ENCODE measurements at regions of chr3 and their contacts with region 1.

Region 1: GRCh38 chr3:197256836-197257444 is 41.5 kb downstream of the DLG1 start:
- DNase-seq: no peak
- ATAC-seq: no peak
- H3K4me3 ChIP-seq: no peak overlapping the region
- H3K27ac ChIP-seq: no peak overlapping the region
- H3K4me1 ChIP-seq: peaks cover 3% of the 10 kb centered on the region
- H3K27me3 ChIP-seq: no peaks in the 10 kb centered on the region

Region 2: GRCh38 chr3:197456261-197457091 is 199.5 kb after region 1 on chr3:
- intact Hi-C with region 1: loop called in 1 of 4 experiments (anchors 10 kb)
- DNase-seq: peak; percentile 92 to 95 (median 95)
- ATAC-seq: peak; percentile 97
- H3K4me3 ChIP-seq: peak overlapping the region; percentile 78
- H3K27ac ChIP-seq: peak overlapping the region; percentile 80
- H3K4me1 ChIP-seq: no peaks in the 10 kb centered on the region
- H3K27me3 ChIP-seq: no peaks in the 10 kb centered on the region

Region 3: GRCh38 chr3:197504239-197505121 is 247.5 kb after region 1 on chr3:
- intact Hi-C with region 1: loop called in 2 of 4 experiments (anchors 2 to 5 kb)
- DNase-seq: no peak
- ATAC-seq: no peak
- H3K4me3 ChIP-seq: no peak overlapping the region
- H3K27ac ChIP-seq: no peak overlapping the region
- H3K4me1 ChIP-seq: no peaks in the 10 kb centered on the region
- H3K27me3 ChIP-seq: no peaks in the 10 kb centered on the region

Region 4: DNA sequence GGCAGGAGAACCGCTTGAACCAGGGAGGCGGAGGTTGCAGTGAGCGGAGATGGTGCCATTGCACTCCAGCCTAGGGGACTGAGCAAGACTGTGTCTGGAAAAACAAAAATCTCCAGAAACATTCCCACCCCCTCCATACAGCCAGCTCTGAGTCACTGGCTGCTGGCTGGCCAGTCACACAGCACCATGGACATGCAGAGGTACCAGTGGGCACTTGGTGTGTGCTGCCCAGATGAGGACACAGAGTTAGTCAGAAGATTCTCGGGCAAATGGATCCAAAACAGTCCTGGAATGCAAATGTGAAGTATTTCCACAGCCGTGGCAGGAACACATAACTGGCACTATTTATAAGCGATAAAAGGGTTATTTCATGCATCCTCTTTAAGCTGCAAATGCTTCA is 254.2 kb after region 1 on chr3:
- intact Hi-C with region 1: loop called (anchors 2 to 5 kb)
- DNase-seq: no peak
- ATAC-seq: no peak
- H3K4me3 ChIP-seq: no peak overlapping the region
- H3K27ac ChIP-seq: no peak overlapping the region
- H3K4me1 ChIP-seq: no peaks in the 10 kb centered on the region
- H3K27me3 ChIP-seq: no peaks in the 10 kb centered on the region

Measured in right cardiac atrium (tissue), 5 donors.